ENCODE measurements at regions of chr11 and their contacts with region 1.

Region 1: GRCh38 chr11:2196970-2197770 is 25.6 kb upstream of the TH start:
- DNase-seq: peak; percentile 78 to 85
- H3K4me3 ChIP-seq: no peak overlapping the region
- H3K27ac ChIP-seq: no peak overlapping the region
- H3K4me1 ChIP-seq: no peaks in the 10 kb centered on the region
- H3K27me3 ChIP-seq: no peaks in the 10 kb centered on the region
- CTCF ChIP-seq: peak; percentile 73 to 98 (median 93)
- POLR2A ChIP-seq: no peak

Region 2: DNA sequence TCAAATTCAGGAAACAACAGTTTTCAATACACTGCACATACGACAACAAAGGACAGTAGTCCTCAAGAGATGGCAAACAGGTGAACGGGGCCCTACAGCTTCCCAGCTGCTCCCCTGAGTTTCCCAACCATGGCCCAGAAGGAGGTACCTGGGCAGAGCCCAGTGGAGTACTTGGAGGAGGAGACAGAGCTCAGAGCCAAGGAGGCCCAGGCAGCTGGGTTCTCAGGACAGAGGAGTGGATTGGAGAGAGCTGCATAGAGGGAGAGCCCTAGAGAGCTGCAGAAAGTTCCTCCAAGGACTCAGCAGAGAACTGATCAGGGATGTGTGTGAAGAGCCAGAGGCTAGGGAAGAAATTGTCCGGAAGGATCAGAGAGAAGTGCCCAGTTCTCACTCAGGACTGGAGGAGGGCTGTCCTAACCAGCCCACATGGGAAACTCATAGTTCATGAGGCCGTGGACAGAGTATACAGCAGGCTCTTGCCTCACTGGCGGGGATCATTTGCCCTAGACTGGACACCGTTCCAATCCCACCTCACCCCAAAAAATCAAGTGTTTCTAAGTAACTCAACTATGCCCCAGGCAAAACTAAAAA is 80.9 kb after region 1 on chr11:
- intact Hi-C with region 1: loop called (anchors 1 kb)
- DNase-seq: peak in 1 of 2 donors; percentile 15
- H3K4me3 ChIP-seq: no peak overlapping the region
- H3K27ac ChIP-seq: peak overlapping the region in 1 of 2 donors; percentile 40
- H3K4me1 ChIP-seq: no peaks in the 10 kb centered on the region
- H3K27me3 ChIP-seq: no peaks in the 10 kb centered on the region
- CTCF ChIP-seq: no peak
- POLR2A ChIP-seq: no peak

Region 3: DNA sequence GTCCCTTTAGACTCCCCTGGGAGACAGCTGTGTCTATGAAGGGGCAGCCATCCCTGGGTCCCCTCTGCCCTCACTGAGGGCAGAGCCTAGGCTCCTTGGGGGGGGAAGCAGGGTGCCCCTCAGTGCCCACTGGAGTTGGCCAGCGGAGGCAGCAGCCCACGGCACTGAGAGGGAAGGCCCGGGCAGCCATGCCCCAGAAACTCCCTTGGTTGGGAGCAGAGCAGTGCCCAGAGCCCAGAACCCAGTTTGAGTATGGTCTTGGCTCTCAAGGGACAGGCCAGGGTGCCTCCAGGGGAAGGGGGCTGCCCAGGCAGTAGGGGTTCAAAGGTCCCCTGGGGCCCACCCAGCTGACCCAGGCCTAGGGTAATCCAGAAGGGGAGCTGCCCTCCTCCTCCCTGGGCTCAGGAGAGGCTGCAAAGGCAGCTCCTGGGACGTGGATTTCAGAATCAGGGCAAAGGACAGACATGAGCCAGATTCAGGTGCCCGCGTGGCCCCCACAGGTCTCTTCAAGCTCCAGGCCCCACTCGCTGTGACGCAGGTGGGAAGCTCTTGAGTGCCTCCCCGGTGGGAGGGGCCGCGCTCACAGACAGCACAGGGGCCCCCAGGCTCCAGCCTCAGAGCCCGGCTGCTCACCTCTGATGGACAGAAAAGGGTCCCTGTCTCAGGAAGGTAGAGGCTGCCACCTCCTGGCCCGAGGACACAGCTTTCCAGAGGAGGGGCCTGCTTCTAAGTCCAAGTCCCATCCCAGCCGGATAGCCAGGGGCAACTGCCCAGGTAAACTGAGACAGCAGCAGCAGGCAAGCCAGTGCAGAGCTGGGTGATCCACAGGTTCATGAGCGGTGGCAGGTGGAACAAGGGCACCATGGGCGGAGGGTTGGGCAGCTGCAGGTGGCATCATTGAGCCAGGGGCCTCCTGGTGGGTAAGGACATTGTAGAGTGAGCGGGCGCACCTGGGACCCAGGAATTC is 101.9 kb after region 1 on chr11:
- intact Hi-C with region 1: loop called (anchors 5 kb)
- DNase-seq: peak; percentile 39 to 65
- H3K4me3 ChIP-seq: no peak overlapping the region
- H3K27ac ChIP-seq: no peak overlapping the region
- H3K4me1 ChIP-seq: no peaks in the 10 kb centered on the region
- H3K27me3 ChIP-seq: no peaks in the 10 kb centered on the region
- CTCF ChIP-seq: peak in 2 of 3 donors; percentile 58 to 67
- POLR2A ChIP-seq: no peak

Region 4: DNA sequence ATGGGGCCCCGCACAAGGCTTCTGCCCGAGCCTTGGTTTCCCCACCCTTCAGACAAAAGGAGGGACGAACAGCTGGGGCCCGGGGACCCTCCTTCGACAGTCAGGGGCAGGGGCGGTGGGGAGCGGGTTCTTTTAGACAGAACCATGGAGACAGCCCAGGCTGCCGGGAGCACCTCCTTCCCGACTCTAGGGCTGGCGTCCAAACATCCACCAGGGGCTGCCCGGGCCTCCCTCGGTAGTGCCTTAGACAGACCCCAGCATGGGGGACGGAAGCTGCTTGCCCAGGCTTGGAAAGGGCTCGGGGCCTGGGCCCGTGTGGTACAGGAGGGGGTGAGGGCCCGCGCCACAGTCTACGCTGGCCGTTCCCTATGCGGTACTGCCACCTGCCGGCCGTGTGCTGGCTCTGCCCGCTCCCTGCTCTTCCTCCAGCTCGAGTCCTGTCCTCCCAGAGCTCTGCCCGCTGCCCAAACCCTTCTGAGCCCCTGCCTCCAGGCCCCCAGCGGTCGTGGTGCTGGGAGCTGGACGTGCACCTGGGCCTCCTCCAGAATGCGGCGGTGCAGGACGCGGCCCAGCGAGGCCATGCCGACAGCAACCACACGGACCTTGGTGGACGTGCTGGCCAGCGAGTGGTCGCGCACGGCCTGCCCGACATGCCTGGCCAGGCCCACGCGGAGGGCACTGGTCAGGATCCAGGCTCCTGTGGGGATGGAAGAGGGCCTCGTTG is 223.5 kb after region 1 on chr11:
- intact Hi-C with region 1: loop called (anchors 5 kb)
- DNase-seq: peak in 1 of 2 donors; percentile 72
- H3K4me3 ChIP-seq: peak overlapping the region in 1 of 3 donors; percentile 46
- H3K27ac ChIP-seq: no peak overlapping the region
- H3K4me1 ChIP-seq: peaks cover 0 to 3% of the 10 kb centered on the region in 2 donors
- H3K27me3 ChIP-seq: peaks cover 0 to 4% of the 10 kb centered on the region in 2 donors
- CTCF ChIP-seq: peak; percentile 63 to 96 (median 91)
- POLR2A ChIP-seq: no peak